ENCODE measurements at regions of chr14 and their contacts with region 1.

Region 1: GRCh38 chr14:68795597-68796417 is 2.9 kb upstream of the ZFP36L1 start:
- DNase-seq: peak; percentile 83
- ATAC-seq: peak; percentile 41
- H3K4me3 Mint-ChIP-seq: peak overlapping the region; percentile 100
- H3K27ac Mint-ChIP-seq: peak overlapping the region; percentile 99
- H3K4me1 Mint-ChIP-seq: peaks cover 48% of the 10 kb centered on the region
- H3K27me3 Mint-ChIP-seq: no peaks in the 10 kb centered on the region
- CTCF ChIP-seq: no peak

Region 2: DNA sequence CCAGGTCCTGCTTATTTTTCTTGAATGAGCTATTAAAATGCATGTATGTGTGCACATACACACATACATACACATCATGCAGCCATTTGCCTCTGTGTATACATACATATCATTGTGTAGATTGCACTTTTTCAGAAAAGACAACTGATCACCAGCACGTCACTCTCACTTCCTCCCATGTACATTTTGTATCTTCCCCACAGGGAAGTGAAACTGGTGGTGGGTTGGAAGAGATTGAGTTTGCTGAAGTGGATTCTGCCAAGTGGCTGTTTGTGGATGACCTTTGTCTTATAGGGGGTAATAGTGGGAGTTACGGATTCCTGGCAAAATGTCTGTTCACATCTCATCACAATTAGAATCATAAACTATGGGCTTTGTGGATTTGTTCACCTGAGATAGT is 527.6 kb before region 1 on chr14:
- CTCF ChIA-PET with region 1: no interaction called
- POLR2A ChIA-PET with region 1: interaction called, 413 read pairs
- intact Hi-C with region 1: loop called (anchors 1 kb)
- DNase-seq: no peak
- ATAC-seq: peak; percentile 67
- H3K4me3 Mint-ChIP-seq: peak overlapping the region; percentile 63
- H3K27ac Mint-ChIP-seq: peak overlapping the region; percentile 93
- H3K4me1 Mint-ChIP-seq: peaks cover 93% of the 10 kb centered on the region
- H3K27me3 Mint-ChIP-seq: no peaks in the 10 kb centered on the region
- CTCF ChIP-seq: no peak

Region 3: DNA sequence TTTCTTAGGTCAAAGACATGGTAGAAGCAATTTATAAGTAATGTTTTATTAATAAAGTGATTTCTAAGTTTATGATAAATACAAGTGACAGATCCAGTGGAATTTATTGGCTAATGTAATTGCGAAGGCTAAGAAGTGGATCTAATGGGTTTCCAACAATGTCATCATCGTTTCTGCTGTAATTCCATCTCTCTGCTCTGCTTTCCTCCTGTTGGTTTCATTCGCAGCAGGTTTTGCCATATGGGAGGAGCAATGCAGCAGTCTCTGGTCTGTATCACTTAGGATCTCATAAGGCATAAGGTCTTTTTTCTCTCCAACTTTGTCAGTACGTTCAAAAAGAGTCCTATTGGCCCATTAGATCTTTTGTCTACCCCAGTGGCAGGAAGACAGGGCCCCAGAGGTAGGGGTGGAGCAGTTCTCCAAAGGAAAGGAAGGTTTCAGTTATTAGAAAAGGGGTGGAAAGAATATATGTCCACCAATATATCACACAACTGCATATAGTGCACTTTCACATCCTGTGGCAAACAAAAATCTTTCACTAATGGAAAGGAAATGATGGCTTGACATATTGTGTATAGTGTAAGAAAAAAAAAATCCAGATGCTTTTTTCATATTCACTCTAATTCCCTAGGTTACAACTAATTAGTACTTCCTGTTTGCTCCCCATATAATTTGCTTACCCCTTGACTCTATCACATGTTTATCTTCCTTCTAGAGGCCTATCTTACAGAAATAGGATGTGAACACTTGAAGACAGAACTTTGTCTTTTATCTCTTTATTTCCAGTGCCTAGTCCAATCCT is 454.2 kb before region 1 on chr14:
- CTCF ChIA-PET with region 1: no interaction called
- POLR2A ChIA-PET with region 1: interaction called, 16 read pairs
- intact Hi-C with region 1: no loop called
- DNase-seq: no peak
- ATAC-seq: peak; percentile 34
- H3K4me3 Mint-ChIP-seq: no peak overlapping the region
- H3K27ac Mint-ChIP-seq: peak overlapping the region; percentile 59
- H3K4me1 Mint-ChIP-seq: peaks cover 67% of the 10 kb centered on the region
- H3K27me3 Mint-ChIP-seq: no peaks in the 10 kb centered on the region
- CTCF ChIP-seq: no peak

Region 4: GRCh38 chr14:68471029-68471963 is 324.5 kb before region 1 on chr14:
- CTCF ChIA-PET with region 1: no interaction called
- POLR2A ChIA-PET with region 1: interaction called, 63 read pairs
- intact Hi-C with region 1: loop called (anchors 2 kb)
- DNase-seq: peak; percentile 22
- ATAC-seq: peak; percentile 69
- H3K4me3 Mint-ChIP-seq: peak overlapping the region; percentile 38
- H3K27ac Mint-ChIP-seq: peak overlapping the region; percentile 96
- H3K4me1 Mint-ChIP-seq: peaks cover 85% of the 10 kb centered on the region
- H3K27me3 Mint-ChIP-seq: no peaks in the 10 kb centered on the region
- CTCF ChIP-seq: no peak

Region 5: GRCh38 chr14:68520637-68521556 is 274.9 kb before region 1 on chr14:
- CTCF ChIA-PET with region 1: no interaction called
- POLR2A ChIA-PET with region 1: interaction called, 585 read pairs
- intact Hi-C with region 1: no loop called
- DNase-seq: no peak
- ATAC-seq: no peak
- H3K4me3 Mint-ChIP-seq: no peak overlapping the region
- H3K27ac Mint-ChIP-seq: no peak overlapping the region
- H3K4me1 Mint-ChIP-seq: peaks cover 56% of the 10 kb centered on the region
- H3K27me3 Mint-ChIP-seq: no peaks in the 10 kb centered on the region
- CTCF ChIP-seq: no peak

Region 6: GRCh38 chr14:68734231-68734775 is 61.5 kb before region 1 on chr14:
- CTCF ChIA-PET with region 1: no interaction called
- POLR2A ChIA-PET with region 1: interaction called, 36 read pairs
- intact Hi-C with region 1: no loop called
- DNase-seq: no peak
- ATAC-seq: peak; percentile 74
- H3K4me3 Mint-ChIP-seq: peak overlapping the region; percentile 39
- H3K27ac Mint-ChIP-seq: peak overlapping the region; percentile 82
- H3K4me1 Mint-ChIP-seq: peaks cover 78% of the 10 kb centered on the region
- H3K27me3 Mint-ChIP-seq: no peaks in the 10 kb centered on the region
- CTCF ChIP-seq: no peak